ENCODE measurements at regions of chr1 and their contacts with region 1.

Region 1: DNA sequence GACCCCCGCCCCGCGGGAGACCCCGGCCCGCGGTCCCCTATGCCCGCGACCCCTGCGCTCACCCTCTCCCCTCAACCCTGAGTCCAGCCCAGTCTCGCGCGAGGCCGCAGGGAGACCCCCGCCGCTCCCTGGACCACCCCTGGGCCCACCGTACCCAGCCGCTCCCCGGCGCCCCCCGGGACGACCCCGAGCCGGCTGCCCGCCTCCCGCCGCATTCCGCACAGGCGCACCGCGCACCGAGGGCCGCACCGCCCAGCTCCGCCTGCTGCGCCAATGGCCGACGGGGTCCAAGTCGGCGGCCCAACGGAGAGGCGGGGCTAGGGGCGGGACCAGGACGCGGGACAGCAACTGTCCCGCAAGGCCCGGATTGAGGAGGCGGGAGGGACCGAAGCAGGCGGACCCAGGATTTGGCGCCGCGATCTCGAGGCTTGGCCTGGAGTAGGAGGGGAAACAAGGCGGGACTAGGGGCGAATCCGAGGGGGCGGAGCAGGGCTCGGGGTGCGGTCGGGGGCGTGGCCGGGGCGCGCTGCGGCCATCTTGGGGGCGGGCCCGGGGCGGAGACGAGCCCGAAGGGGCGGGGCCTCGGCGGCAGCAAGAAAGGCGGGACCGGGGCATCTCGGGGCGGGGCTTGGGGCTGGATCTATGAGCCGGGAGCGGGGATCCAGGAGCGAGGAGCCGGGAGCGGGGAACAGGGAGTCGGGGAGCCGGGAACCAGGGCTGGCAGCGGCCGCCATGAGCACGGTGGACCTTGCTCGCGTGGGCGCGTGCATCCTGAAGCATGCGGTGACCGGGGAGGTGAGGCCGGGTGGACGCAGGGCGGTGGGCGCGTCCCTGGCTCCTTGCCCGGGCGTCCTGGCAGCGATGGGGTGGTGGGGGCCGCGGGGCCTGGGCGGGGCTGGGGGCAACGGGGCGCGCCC is at the start of gene PRXL2B:
- DNase-seq: peak; percentile 96
- H3K4me3 Mint-ChIP-seq: peak within 1 kb of the TSS; percentile 72
- H3K27ac Mint-ChIP-seq: peak within 1 kb of the TSS; percentile 73
- H3K4me1 Mint-ChIP-seq: peaks cover 20% of the 10 kb centered on the region
- H3K27me3 Mint-ChIP-seq: no peaks in the 10 kb centered on the region
- CTCF ChIP-seq: no peak
- total RNA-seq, gene PRXL2B: 31.0 and 51.5 TPM in 2 replicates

Region 2: GRCh38 chr1:2205191-2205952 is 381.0 kb before region 1 on chr1:
- CTCF ChIA-PET with region 1: no interaction called
- intact Hi-C with region 1: no loop called
- DNase-seq: peak; percentile 88
- H3K4me3 Mint-ChIP-seq: peak overlapping the region; percentile 34
- H3K27ac Mint-ChIP-seq: no peak overlapping the region
- H3K4me1 Mint-ChIP-seq: peaks cover 19% of the 10 kb centered on the region
- H3K27me3 Mint-ChIP-seq: no peaks in the 10 kb centered on the region
- CTCF ChIP-seq: no peak

Region 3: DNA sequence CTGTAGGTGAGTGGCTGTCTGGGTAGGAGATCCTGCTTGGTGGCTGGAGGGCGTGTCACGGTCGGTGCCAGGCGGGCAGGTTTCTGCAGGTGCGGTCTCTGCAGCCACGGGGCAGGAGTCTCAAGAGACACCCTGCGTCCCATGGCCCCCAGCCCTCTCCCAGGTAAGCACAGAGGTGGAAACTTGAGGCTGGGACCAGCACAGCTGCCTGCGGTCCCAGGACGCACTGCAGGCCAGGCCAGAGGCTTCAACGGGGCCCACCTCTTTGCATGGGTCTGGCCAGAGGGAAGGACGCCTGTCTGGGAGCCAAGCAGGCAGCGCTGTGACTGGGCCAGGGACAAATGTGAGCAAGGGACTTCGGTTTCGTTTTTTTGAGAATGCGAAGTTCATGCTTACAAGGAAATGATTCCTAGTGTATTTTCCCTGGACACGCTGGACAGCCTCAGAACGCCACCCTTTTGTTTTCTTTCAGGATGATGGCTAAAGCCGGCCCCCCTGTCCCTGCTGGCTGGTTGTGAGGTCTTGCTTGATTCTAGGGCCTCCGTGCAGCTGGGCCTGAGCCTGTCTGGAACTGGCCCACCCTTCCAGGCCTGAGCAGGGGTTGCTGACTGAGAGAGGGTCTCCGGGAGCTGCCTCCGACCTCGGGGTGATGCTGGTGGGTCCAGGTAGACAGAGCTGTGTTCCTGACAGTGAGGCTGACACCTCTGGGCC is 233.4 kb before region 1 on chr1:
- CTCF ChIA-PET with region 1: no interaction called
- intact Hi-C with region 1: no loop called
- DNase-seq: no peak
- H3K4me3 Mint-ChIP-seq: no peak overlapping the region
- H3K27ac Mint-ChIP-seq: no peak overlapping the region
- H3K4me1 Mint-ChIP-seq: no peaks in the 10 kb centered on the region
- H3K27me3 Mint-ChIP-seq: no peaks in the 10 kb centered on the region
- CTCF ChIP-seq: no peak

Region 4: GRCh38 chr1:2627746-2628145 is 41.3 kb after region 1 on chr1:
- CTCF ChIA-PET with region 1: no interaction called
- intact Hi-C with region 1: loop called (anchors 2 kb)
- DNase-seq: no peak
- H3K4me3 Mint-ChIP-seq: no peak overlapping the region
- H3K27ac Mint-ChIP-seq: no peak overlapping the region
- H3K4me1 Mint-ChIP-seq: no peaks in the 10 kb centered on the region
- H3K27me3 Mint-ChIP-seq: peaks cover 75% of the 10 kb centered on the region
- CTCF ChIP-seq: no peak

Region 5: DNA sequence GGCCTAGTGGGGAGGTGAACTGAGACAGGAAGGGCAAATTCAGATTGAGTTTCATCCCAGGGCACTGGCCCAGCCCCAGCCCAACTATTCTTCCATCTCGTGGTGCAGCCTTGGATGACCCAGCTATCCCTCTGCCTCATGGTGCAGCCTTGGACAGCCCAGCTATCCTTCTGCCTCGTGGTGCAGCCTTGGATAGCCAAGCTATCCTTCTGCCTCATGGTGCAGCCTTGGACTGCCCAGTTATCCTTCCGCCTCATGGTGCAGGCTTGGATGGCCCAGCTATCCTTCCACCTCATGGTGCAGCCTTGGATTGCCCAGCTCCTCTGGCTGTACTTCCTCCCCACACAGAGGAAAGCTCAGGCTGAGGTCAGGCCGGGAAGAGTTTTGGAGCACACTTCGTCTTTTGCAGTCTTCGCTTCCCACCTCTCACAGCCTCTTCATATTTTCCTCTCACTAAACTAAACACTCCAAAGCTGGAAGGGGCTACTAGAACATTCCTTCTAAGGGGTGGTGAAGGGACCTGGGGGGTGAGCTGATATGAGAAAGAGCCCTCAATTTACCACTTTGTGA is 284.9 kb after region 1 on chr1:
- CTCF ChIA-PET with region 1: no interaction called
- intact Hi-C with region 1: no loop called
- DNase-seq: no peak
- H3K4me3 Mint-ChIP-seq: no peak overlapping the region
- H3K27ac Mint-ChIP-seq: no peak overlapping the region
- H3K4me1 Mint-ChIP-seq: no peaks in the 10 kb centered on the region
- H3K27me3 Mint-ChIP-seq: peaks cover 61% of the 10 kb centered on the region
- CTCF ChIP-seq: no peak